ENCODE measurements at regions of chr1 and their contacts with region 1.

Region 1: DNA sequence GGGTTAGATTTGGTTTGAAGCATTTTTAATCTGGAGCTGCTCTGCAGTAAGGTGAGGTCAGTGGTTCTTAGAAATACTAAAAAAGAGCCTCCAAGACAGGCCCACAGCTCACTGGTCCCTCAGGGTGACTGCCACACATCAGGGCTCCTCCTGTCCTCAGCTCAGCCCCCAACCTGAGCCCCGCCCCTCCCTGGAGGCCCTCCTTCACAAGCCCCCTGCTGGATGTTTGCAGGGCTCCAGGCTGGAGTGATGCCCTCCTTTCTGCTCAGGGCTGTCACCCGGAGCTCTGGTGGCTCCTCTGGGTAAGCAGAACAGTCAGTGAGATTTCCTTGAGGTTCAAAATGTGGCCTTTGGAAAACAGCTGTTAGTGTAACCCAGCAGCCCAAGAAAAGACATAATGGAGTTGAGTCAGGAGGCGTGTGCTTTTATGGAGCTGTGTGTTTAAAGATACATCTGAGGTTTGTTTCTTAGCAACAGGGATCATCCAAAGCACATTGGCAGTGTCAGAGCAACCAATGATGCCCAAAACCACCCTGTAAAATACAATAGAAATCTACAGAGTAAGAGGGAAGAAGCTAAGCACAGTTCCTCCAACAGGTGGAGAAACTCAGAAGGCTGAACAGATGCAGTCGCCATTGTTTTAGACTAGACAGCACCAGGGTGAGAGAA is 21.4 kb downstream of the STUM start:
- DNase-seq: peak in 1 of 2 experiments; percentile 78
- H3K4me3 ChIP-seq: no peak overlapping the region
- H3K27ac ChIP-seq: no peak overlapping the region
- H3K4me1 ChIP-seq: peaks cover 0 to 4% (median 2%) of the 10 kb centered on the region in 4 experiments; a peak in 2 of 7 replicates
- H3K27me3 ChIP-seq: no peaks in the 10 kb centered on the region
- CTCF ChIP-seq: peak; percentile 64 to 69 (median 65)
- EP300 ChIP-seq: no peak
- POLR2A ChIP-seq: no peak
- RAD21 ChIP-seq: peak; percentile 20 to 50; a peak in 2 of 4 replicates

Region 2: DNA sequence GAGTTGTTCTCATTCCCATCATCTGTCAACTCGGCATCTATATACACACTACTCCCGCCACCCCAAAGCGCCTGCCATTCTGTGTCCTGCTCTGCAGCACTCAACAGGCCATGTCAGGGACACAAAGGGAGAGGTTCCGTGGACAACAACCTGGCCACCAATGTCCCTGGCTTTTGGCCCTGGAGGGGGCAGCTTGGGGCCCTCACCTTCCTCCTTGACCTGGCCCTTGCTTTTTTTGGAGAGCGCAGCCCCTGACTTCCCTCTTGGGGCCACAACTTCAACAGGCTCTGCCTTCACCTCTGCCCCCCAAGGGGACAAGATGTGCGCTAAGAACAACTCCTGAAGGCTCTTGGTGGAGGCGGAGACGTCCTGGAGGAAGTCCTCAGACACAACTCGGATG is 190.3 kb before region 1 on chr1:
- CTCF ChIA-PET with region 1: no interaction called
- POLR2A ChIA-PET with region 1: no interaction called
- DNase-seq: no peak
- H3K4me3 ChIP-seq: no peak overlapping the region
- H3K27ac ChIP-seq: no peak overlapping the region
- H3K4me1 ChIP-seq: no peaks in the 10 kb centered on the region
- H3K27me3 ChIP-seq: no peaks in the 10 kb centered on the region
- CTCF ChIP-seq: no peak
- EP300 ChIP-seq: no peak
- POLR2A ChIP-seq: no peak
- RAD21 ChIP-seq: no peak

Region 3: GRCh38 chr1:226407497-226408284 is 162.3 kb before region 1 on chr1 and contains the start of gene PARP1:
- CTCF ChIA-PET with region 1: interaction called, 10 read pairs
- POLR2A ChIA-PET with region 1: no interaction called
- DNase-seq: peak in 1 of 2 experiments; percentile 90
- H3K4me3 ChIP-seq: peak within 1 kb of the TSS; percentile 57 to 99 (median 92)
- H3K27ac ChIP-seq: peak within 1 kb of the TSS; percentile 73
- H3K4me1 ChIP-seq: peaks cover 16 to 30% (median 21%) of the 10 kb centered on the region in 4 experiments
- H3K27me3 ChIP-seq: no peaks in the 10 kb centered on the region
- CTCF ChIP-seq: peak; percentile 54 to 77 (median 61)
- EP300 ChIP-seq: no peak; a peak in 1 of 3 replicates
- POLR2A ChIP-seq: peak in 1 of 2 experiments; percentile 70; a peak in 1 of 3 replicates
- RAD21 ChIP-seq: peak in 1 of 2 experiments; percentile 34; a peak in 1 of 4 replicates
- total RNA-seq, gene PARP1: 408 and 416 TPM in 2 replicates

Region 4: DNA sequence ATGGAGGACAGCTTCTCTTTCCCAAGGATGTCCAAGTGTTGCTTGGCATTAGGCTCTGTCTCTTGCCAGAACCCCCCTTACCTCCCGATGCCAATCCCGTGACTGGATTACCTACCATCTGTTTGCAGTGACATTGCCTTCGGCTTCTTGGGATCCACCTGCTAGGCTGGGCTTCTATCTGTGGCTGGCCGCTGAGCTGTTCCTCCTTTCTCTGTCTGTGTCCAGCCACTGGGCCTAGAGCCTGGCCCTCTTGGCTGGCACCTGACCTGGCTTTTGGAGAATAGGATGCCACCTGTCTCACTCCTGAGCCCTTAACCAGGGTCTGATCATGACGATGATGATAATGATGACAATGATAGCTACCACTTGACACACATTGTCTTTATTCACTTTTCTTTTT is 63.1 kb before region 1 on chr1:
- CTCF ChIA-PET with region 1: no interaction called
- POLR2A ChIA-PET with region 1: no interaction called
- DNase-seq: no peak
- H3K4me3 ChIP-seq: no peak overlapping the region
- H3K27ac ChIP-seq: no peak overlapping the region
- H3K4me1 ChIP-seq: no peaks in the 10 kb centered on the region
- H3K27me3 ChIP-seq: no peaks in the 10 kb centered on the region
- CTCF ChIP-seq: no peak
- EP300 ChIP-seq: no peak
- POLR2A ChIP-seq: no peak
- RAD21 ChIP-seq: no peak

Region 5: GRCh38 chr1:226519716-226520598 is 50.1 kb before region 1 on chr1:
- CTCF ChIA-PET with region 1: interaction called, 21 read pairs
- POLR2A ChIA-PET with region 1: interaction called, 3 read pairs
- DNase-seq: no peak
- H3K4me3 ChIP-seq: peak overlapping the region in 3 of 4 experiments; percentile 26 to 30 (median 30); a peak in 4 of 8 replicates
- H3K27ac ChIP-seq: no peak overlapping the region
- H3K4me1 ChIP-seq: peaks cover 6 to 22% (median 9%) of the 10 kb centered on the region in 4 experiments
- H3K27me3 ChIP-seq: peaks cover 0 to 3% (median 0%) of the 10 kb centered on the region in 4 experiments; a peak in 2 of 7 replicates
- CTCF ChIP-seq: peak; percentile 51 to 76 (median 76)
- EP300 ChIP-seq: no peak
- POLR2A ChIP-seq: no peak
- RAD21 ChIP-seq: peak; percentile 39 to 65; a peak in 3 of 4 replicates

Region 6: DNA sequence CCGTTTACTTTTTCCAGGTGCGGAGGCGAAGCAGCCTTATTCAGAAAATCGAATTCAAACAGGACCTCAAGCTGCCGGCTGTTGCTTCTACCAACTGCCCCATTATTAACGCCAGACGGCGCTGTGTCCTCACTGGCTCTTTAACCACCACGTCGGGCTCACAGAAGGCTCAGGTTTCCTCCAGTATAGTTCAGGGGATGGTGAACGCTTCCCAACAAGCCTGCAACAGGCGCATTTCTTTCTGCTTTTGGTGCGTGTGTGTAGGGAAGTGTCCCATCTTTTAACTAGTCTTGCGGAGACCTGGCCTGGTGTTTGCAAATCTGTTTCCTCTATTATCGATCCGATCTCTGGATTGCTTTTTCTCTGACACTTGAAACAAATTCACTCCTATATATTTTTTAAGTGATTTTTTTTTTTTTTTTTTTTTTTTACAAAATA is 22.2 kb before region 1 on chr1:
- CTCF ChIA-PET with region 1: interaction called, 42 read pairs
- POLR2A ChIA-PET with region 1: no interaction called
- DNase-seq: peak; percentile 80 to 81
- H3K4me3 ChIP-seq: peak overlapping the region in 2 of 4 experiments; percentile 13 to 62; a peak in 5 of 8 replicates
- H3K27ac ChIP-seq: no peak overlapping the region
- H3K4me1 ChIP-seq: peaks cover 3 to 24% (median 14%) of the 10 kb centered on the region in 4 experiments
- H3K27me3 ChIP-seq: peaks cover 10 to 50% (median 46%) of the 10 kb centered on the region in 4 experiments
- CTCF ChIP-seq: peak; percentile 85 to 96 (median 93)
- EP300 ChIP-seq: peak in 1 of 2 experiments; percentile 29; a peak in 1 of 3 replicates
- POLR2A ChIP-seq: no peak
- RAD21 ChIP-seq: peak; percentile 85 to 92

Region 7: DNA sequence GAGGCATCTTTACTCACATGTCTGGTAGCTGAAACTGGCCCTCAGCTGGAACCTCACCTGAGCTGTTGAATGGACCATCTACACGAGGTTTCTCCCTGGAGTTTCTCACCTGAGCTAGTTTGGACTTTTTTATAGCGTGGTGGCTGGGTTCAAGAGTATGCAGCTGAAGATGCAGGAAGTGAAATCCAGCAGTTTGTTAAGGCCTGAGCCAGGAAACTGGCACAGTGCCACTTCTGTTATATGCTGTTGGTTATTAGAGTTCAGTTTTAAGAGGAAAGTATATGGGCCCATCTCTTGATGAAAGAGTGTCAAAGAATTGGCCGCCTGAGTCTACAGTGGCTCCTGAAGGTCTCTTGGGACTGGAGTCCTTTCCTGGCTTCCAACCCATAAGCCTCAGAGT is 14.2 kb after region 1 on chr1:
- CTCF ChIA-PET with region 1: interaction called, 27 read pairs
- POLR2A ChIA-PET with region 1: interaction called, 4 read pairs
- DNase-seq: no peak
- H3K4me3 ChIP-seq: no peak overlapping the region
- H3K27ac ChIP-seq: no peak overlapping the region
- H3K4me1 ChIP-seq: no peaks in the 10 kb centered on the region
- H3K27me3 ChIP-seq: no peaks in the 10 kb centered on the region
- CTCF ChIP-seq: no peak
- EP300 ChIP-seq: no peak
- POLR2A ChIP-seq: no peak
- RAD21 ChIP-seq: no peak

Region 8: DNA sequence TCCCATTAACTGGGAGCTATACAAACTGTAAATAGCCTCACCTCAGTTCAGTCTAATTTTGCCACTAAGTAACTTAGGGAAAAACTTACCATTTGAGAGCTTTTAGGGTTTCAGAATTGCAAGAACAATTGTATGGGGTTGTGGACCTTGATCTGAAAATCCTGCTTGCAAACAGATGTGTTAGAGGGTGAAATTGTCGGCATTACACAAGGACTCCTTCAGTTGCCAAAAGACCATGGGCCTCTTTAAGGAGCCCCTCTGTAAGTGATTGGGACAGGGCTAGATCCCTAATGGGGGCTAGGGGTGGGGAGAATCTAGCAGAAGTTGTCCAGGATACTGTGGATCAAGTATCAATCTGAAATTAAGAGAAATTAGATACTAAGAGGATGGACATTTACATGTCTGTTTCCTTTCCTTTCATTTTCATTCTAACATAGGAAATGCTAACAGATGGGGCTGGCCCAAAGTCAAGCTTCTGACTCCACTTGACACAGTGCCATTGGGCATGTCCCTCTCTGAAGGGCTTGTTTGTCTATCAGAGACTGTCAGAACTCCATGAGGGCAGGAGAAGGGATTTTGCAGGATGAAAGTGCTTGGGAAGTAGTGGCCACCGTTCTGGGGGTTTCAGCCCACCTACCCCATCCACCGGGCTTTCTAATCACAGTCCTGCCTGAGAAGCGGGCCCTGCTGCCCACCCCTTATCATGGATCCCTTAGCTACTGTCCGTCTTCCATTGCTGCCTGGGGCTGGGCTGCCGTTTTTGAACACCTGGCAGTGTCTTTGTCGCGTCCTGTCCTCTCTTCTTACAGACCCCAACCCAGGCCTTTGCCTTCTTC is 33.2 kb after region 1 on chr1:
- CTCF ChIA-PET with region 1: interaction called, 35 read pairs
- POLR2A ChIA-PET with region 1: no interaction called
- DNase-seq: no peak
- H3K4me3 ChIP-seq: no peak overlapping the region
- H3K27ac ChIP-seq: no peak overlapping the region
- H3K4me1 ChIP-seq: peaks cover 0 to 27% (median 13%) of the 10 kb centered on the region in 4 experiments; a peak in 6 of 7 replicates
- H3K27me3 ChIP-seq: no peaks in the 10 kb centered on the region
- CTCF ChIP-seq: no peak
- EP300 ChIP-seq: no peak
- POLR2A ChIP-seq: no peak
- RAD21 ChIP-seq: no peak

Measured in H1 (cell line).